Panc1 (cell line): ENCODE measurements at regions of chr6 and their contacts with region 1.

Region 1: DNA sequence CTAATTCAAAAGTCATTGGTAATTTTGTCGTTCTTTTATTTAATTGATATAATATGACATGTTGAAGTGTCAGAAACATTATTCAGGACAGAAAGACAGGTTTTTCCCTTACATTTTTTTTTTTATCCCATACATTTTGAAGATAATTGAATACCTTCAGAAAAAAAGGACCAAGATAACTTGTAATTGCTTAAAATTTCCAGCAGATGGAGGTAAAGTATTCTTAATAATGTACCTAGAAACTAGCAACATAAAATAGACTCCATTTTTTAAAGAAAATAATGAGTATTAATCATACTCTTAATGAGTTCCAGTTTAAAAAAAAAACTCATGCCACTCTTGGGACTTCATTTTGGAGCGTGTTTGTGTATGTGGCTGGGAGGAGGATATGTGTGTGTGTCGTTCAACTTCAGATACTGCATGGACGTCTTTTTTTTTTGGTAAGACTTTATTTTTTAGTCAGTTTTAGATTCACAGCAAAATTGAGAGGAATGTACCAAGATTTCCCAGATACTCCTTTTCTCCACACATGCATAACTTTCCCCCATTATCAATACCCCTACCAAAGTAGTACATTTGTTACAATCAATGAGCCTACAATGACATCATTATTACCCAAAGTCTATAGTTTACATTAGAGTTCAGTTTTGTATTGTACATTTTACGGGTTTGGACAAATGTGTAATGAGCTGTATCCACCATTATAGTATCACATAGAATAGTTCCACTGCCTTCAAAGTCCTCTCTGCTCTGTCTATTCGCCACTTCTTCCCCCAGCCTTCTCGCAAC is 79.4 kb downstream of the ROS1 start:
- DNase-seq: no peak
- ATAC-seq: no peak
- H3K4me3 ChIP-seq: no peak overlapping the region
- H3K27ac ChIP-seq: no peak overlapping the region
- H3K4me1 ChIP-seq: no peaks in the 10 kb centered on the region
- H3K27me3 ChIP-seq: peaks cover 6% of the 10 kb centered on the region
- CTCF ChIP-seq: peak; percentile 59; the same call in 1 of the 2 replicates

Region 2: DNA sequence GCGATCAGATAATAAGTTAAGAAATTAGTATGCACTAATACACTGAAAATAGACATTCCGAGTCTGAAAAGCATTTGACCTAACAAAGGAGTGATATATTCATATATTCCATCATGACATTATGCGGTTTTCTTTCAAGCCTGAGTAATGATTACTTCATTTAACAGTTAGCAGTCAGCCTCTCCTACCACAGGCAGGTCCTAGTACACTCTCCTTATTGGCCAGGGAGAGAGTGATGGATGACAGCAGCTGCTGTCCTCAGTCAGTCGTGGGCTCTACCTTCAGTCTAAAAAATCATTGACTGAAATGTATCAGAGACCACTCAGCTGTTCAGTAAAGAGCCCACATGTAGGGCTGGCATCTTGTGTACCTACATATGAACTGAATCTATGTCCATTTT is 114.1 kb before region 1 on chr6:
- CTCF ChIA-PET with region 1: no interaction called
- POLR2A ChIA-PET with region 1: no interaction called
- in situ Hi-C with region 1: no loop called
- intact Hi-C with region 1: no loop called
- DNase-seq: no peak
- ATAC-seq: no peak
- H3K4me3 ChIP-seq: no peak overlapping the region
- H3K27ac ChIP-seq: no peak overlapping the region
- H3K4me1 ChIP-seq: no peaks in the 10 kb centered on the region
- H3K27me3 ChIP-seq: no peaks in the 10 kb centered on the region
- CTCF ChIP-seq: no peak

Region 3: DNA sequence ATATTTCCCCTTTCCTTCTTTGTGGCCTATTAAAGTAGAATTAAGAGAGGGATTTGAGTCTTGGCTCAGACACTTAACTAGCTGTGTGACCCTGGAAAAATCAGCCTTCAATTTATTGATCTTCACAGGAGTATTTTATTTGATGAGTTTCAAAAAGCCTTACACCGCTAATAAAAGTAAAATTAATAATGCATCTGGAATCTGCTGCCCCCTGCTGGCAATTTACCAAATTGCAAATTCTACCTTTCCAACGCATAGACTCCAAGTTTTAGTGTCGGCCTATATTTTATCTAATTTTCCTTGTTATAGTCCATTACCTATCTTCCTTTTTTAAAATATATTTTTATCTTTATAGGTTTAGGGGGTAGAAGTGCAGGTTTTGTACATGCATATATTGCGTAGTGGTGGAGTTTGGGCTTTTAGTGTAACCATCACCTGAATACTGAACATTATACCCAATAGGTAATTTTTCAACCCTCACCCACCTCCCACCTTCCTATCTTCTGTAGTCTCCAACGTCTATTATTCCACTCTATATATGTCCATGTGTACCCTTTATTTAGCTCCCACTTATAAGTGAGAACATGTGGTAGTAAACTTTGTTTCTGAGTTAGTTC is 209.7 kb after region 1 on chr6:
- CTCF ChIA-PET with region 1: no interaction called
- POLR2A ChIA-PET with region 1: no interaction called
- in situ Hi-C with region 1: no loop called
- intact Hi-C with region 1: loop called (anchors 2 kb)
- DNase-seq: no peak
- ATAC-seq: 0 out of 2 replicates have a peak, but pooled peaks have one; percentile 54
- H3K4me3 ChIP-seq: no peak overlapping the region
- H3K27ac ChIP-seq: peak overlapping the region; percentile 54
- H3K4me1 ChIP-seq: peaks cover 17% of the 10 kb centered on the region
- H3K27me3 ChIP-seq: no peaks in the 10 kb centered on the region
- CTCF ChIP-seq: peak; percentile 86; the same call in 1 of the 2 replicates

Region 4: DNA sequence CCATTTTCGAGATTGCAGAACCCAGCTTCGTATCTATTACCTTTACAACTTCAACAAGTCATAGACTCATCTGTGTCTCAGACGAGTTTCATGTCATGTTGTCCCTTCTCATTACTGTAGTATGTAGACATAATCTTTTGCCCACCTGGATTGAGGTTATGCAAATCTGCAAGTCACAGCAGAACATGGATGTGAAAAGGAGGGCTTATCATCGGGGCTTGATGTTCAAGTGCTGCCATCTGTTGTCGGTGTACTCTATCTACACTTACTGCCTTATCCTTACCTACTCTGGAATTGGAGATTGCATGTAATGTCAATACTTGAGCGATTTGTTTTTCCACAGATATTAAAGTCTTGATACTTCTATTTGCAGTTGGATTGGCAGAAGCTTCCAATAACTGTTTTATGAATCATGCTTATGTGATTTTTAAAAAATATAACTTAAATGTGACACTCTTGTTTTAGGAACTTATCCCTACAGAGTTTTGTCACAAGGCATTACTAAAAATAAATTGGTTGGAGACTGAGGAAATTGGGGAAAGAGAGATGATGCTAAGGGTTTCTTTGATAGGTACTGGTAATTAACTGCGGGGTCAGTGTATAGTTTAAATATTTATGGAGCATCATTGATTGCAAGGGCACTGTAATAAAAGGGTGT is 259.0 kb after region 1 on chr6:
- CTCF ChIA-PET with region 1: no interaction called
- POLR2A ChIA-PET with region 1: no interaction called
- in situ Hi-C with region 1: no loop called
- intact Hi-C with region 1: loop called (anchors 2 kb)
- DNase-seq: peak; percentile 70
- ATAC-seq: peak; percentile 51
- H3K4me3 ChIP-seq: no peak overlapping the region
- H3K27ac ChIP-seq: no peak overlapping the region
- H3K4me1 ChIP-seq: peaks cover 8% of the 10 kb centered on the region
- H3K27me3 ChIP-seq: no peaks in the 10 kb centered on the region
- CTCF ChIP-seq: peak; percentile 91

Region 5: GRCh38 chr6:117829594-117830319 is 483.4 kb after region 1 on chr6:
- CTCF ChIA-PET with region 1: interaction called, 4 read pairs
- POLR2A ChIA-PET with region 1: no interaction called
- in situ Hi-C with region 1: no loop called
- intact Hi-C with region 1: loop called (anchors 10 kb)
- DNase-seq: no peak
- ATAC-seq: 0 out of 2 replicates have a peak, but pooled peaks have one; percentile 75
- H3K4me3 ChIP-seq: peak overlapping the region; percentile 29 to 37; a peak in 3 of 4 replicates
- H3K27ac ChIP-seq: no peak overlapping the region
- H3K4me1 ChIP-seq: no peaks in the 10 kb centered on the region
- H3K27me3 ChIP-seq: no peaks in the 10 kb centered on the region
- CTCF ChIP-seq: peak; percentile 36; the same call in 1 of the 2 replicates

Region 6: GRCh38 chr6:118263921-118264486 is 917.7 kb after region 1 on chr6:
- CTCF ChIA-PET with region 1: no interaction called
- POLR2A ChIA-PET with region 1: no interaction called
- in situ Hi-C with region 1: no loop called
- intact Hi-C with region 1: loop called (anchors 10 kb)
- DNase-seq: no peak
- ATAC-seq: 0 out of 2 replicates have a peak, but pooled peaks have one; percentile 81
- H3K4me3 ChIP-seq: no peak overlapping the region
- H3K27ac ChIP-seq: no peak overlapping the region
- H3K4me1 ChIP-seq: no peaks in the 10 kb centered on the region
- H3K27me3 ChIP-seq: no peaks in the 10 kb centered on the region
- CTCF ChIP-seq: peak; percentile 65